IMR-90 (cell line): ENCODE measurements at regions of chr10 and their contacts with region 1.

Region 1: DNA sequence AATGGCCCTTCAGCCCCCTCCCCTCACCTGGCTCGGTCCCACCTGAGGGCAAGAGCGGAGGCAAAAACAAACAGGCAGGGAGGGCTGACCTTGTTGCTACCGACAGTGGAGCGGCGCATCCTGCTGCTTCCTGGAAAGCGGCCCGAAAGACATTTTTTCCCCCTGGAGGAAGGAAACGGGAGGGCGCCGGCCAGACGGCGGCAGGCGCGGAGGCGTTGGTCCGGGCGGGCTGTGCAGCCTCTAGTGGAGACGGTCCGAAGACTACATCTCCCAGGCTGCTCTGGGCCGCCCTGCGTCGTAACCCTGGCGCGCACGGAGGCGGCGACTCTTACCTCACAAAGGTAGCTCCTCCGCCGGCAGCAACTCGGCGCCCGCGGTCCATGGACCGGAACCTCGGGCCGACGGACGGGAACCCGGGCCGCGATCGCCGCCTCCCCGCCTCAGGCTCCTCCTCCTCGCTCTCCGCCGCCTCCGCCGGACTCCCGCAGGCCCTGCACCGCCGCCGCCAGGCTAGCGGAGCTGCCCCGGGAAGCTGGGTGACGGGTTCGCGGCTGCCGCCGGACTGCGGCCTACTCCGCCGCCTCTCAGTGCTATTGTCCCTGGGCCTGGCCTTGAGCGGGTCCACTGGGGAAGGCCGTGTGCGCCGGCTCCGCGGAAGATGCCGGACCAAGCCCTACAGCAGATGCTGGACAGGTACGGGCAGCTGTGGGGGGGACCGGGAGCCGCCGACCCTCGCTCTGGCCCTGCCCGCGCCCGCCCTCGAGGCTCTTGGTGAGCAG is at the starts of genes CPEB3 and MARCHF5:
- DNase-seq: peak; percentile 94
- ATAC-seq: peak; percentile 98
- H3K4me3 ChIP-seq: peak within 1 kb of the TSS; percentile 76
- H3K27ac ChIP-seq: peak within 1 kb of the TSS; percentile 79
- H3K4me1 ChIP-seq: peaks cover 5% of the 10 kb centered on the region
- H3K27me3 ChIP-seq: no peaks in the 10 kb centered on the region
- CTCF ChIP-seq: peak; percentile 69
- POLR2A ChIP-seq: peak; percentile 70
- RAD21 ChIP-seq: peak; percentile 64
- total RNA-seq, gene CPEB3: 0.18 and 0.28 TPM in 2 replicates
- total RNA-seq, gene MARCHF5: 14.9 and 20.8 TPM in 2 replicates

Region 2: GRCh38 chr10:91820144-91820543 is 470.9 kb before region 1 on chr10:
- CTCF ChIA-PET with region 1: no interaction called
- POLR2A ChIA-PET with region 1: no interaction called
- dilution Hi-C with region 1: no loop called
- in situ Hi-C with region 1: no loop called
- intact Hi-C with region 1: no loop called
- DNase-seq: peak; percentile 54
- ATAC-seq: no peak
- H3K4me3 ChIP-seq: no peak overlapping the region
- H3K27ac ChIP-seq: no peak overlapping the region
- H3K4me1 ChIP-seq: no peaks in the 10 kb centered on the region
- H3K27me3 ChIP-seq: no peaks in the 10 kb centered on the region
- CTCF ChIP-seq: no peak
- POLR2A ChIP-seq: no peak
- RAD21 ChIP-seq: no peak

Region 3: GRCh38 chr10:92087750-92088395 is 203.2 kb before region 1 on chr10:
- CTCF ChIA-PET with region 1: interaction called, 5 read pairs
- POLR2A ChIA-PET with region 1: no interaction called
- dilution Hi-C with region 1: no loop called
- in situ Hi-C with region 1: loop called (anchors 5 kb)
- intact Hi-C with region 1: loop called (anchors 1 kb)
- DNase-seq: peak; percentile 82
- ATAC-seq: peak; percentile 98
- H3K4me3 ChIP-seq: no peak overlapping the region
- H3K27ac ChIP-seq: no peak overlapping the region
- H3K4me1 ChIP-seq: no peaks in the 10 kb centered on the region
- H3K27me3 ChIP-seq: no peaks in the 10 kb centered on the region
- CTCF ChIP-seq: peak; percentile 96
- POLR2A ChIP-seq: peak; percentile 50; the same call in 1 of the 2 replicates
- RAD21 ChIP-seq: peak; percentile 96

Region 4: GRCh38 chr10:92103376-92104090 is 187.5 kb before region 1 on chr10:
- CTCF ChIA-PET with region 1: interaction called, 3 read pairs
- POLR2A ChIA-PET with region 1: no interaction called
- dilution Hi-C with region 1: no loop called
- in situ Hi-C with region 1: no loop called
- intact Hi-C with region 1: loop called (anchors 5 kb)
- DNase-seq: peak; percentile 79
- ATAC-seq: peak; percentile 58
- H3K4me3 ChIP-seq: no peak overlapping the region
- H3K27ac ChIP-seq: no peak overlapping the region
- H3K4me1 ChIP-seq: peaks cover 6% of the 10 kb centered on the region
- H3K27me3 ChIP-seq: no peaks in the 10 kb centered on the region
- CTCF ChIP-seq: no peak
- POLR2A ChIP-seq: no peak
- RAD21 ChIP-seq: no peak

Region 5: DNA sequence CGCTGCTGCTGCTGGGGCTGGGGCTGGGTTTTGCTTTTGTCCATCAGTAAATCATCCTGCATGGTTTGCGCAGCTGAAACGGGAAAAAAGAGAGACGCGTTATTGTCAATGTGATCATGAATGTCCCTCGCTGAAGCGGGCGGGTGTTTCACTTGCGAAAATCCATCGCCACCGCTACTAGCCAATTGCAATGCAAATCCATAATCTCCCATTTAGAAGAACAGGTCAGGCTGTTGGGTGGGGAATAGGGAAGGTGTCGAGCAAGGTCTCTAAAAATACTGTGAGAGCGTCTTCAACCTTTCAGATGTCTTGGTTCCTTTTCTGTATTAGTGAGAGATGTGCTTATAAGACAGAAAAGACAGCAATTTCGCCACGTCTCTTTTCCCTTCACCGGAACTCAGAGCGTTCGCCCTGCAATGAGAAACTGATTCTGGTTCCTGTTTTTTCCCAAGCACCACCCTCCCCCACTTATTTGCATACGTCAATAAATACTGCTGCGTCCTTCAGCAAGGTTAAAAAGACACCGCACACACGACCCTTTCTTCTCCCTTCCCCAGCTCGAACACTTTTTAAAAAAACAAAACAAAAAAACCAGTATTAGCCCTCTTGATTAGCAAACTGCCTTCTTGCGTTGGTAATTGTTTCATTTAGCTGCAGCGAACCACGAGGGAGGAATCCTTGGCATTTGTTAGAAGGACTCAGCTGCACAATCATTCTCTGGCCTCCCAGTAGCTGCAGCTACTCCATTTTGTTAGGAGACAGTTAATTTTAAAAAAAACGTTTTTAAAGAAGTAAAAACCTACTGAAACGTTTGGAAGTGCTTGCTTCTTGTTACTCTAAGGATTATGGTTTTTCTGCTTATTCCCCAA is 50.5 kb before region 1 on chr10:
- CTCF ChIA-PET with region 1: interaction called, 5 read pairs
- POLR2A ChIA-PET with region 1: no interaction called
- dilution Hi-C with region 1: no loop called
- in situ Hi-C with region 1: no loop called
- intact Hi-C with region 1: loop called (anchors 1 kb)
- DNase-seq: peak; percentile 70
- ATAC-seq: peak; percentile 66
- H3K4me3 ChIP-seq: peak overlapping the region; percentile 78
- H3K27ac ChIP-seq: peak overlapping the region; percentile 31
- H3K4me1 ChIP-seq: peaks cover 2% of the 10 kb centered on the region; the same call in 1 of the 2 replicates
- H3K27me3 ChIP-seq: no peaks in the 10 kb centered on the region
- CTCF ChIP-seq: no peak
- POLR2A ChIP-seq: no peak
- RAD21 ChIP-seq: no peak

Region 6: GRCh38 chr10:92432596-92432995 is 141.6 kb after region 1 on chr10:
- CTCF ChIA-PET with region 1: no interaction called
- POLR2A ChIA-PET with region 1: no interaction called
- dilution Hi-C with region 1: no loop called
- in situ Hi-C with region 1: no loop called
- intact Hi-C with region 1: loop called (anchors 2 kb)
- DNase-seq: no peak
- ATAC-seq: no peak
- H3K4me3 ChIP-seq: no peak overlapping the region
- H3K27ac ChIP-seq: no peak overlapping the region
- H3K4me1 ChIP-seq: no peaks in the 10 kb centered on the region
- H3K27me3 ChIP-seq: no peaks in the 10 kb centered on the region
- CTCF ChIP-seq: no peak
- POLR2A ChIP-seq: no peak
- RAD21 ChIP-seq: no peak